Common myeloid progenitor, CD34-positive (primary cell): ENCODE measurements at regions of chr1 and their contacts with region 1.

Region 1: DNA sequence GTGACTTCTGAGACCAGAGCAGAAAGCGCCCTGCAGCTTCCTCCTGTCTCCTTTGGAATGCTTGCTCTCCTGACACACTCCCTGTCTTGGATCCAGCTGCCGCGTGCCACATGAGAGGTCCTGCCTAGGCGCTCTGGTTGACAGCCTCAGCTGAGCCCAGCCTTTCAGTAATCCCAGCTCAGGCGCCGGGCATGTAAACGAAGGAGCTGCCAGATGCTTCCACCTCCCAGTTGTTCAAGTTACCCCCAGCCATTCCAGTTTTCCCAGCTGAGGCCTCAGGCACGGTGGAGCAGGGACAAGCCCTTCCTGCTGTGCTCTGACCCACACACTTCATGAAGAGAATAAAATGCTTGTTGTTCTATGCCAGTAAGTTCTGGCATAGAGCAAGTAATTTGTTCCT is 14.3 kb upstream of the CD34 start:
- DNase-seq: no peak
- H3K4me3 ChIP-seq: no peak overlapping the region
- H3K27ac ChIP-seq: peak overlapping the region in 1 of 2 experiments; percentile 15
- H3K4me1 ChIP-seq: peaks cover 28 to 65% (median 54%) of the 10 kb centered on the region in 4 experiments
- H3K27me3 ChIP-seq: no peaks in the 10 kb centered on the region

Region 2: GRCh38 chr1:207903767-207904166 is 21.4 kb before region 1 on chr1:
- CTCF ChIA-PET with region 1: interaction called, 83 read pairs
- POLR2A ChIA-PET with region 1: no interaction called
- DNase-seq: peak; percentile 50 to 83 (median 72)
- H3K4me3 ChIP-seq: peak overlapping the region in 1 of 7 experiments; percentile 35
- H3K27ac ChIP-seq: peak overlapping the region; percentile 73 to 85
- H3K4me1 ChIP-seq: peaks cover 44 to 95% (median 81%) of the 10 kb centered on the region in 4 experiments
- H3K27me3 ChIP-seq: no peaks in the 10 kb centered on the region

Region 3: GRCh38 chr1:207941665-207942064 is 16.5 kb after region 1 on chr1:
- CTCF ChIA-PET with region 1: interaction called, 37 read pairs
- POLR2A ChIA-PET with region 1: interaction called, 10 read pairs
- DNase-seq: peak in 2 of 3 donors; percentile 40 to 48
- H3K4me3 ChIP-seq: peak overlapping the region in 3 of 7 experiments; percentile 48 to 73 (median 63)
- H3K27ac ChIP-seq: peak overlapping the region in 1 of 2 experiments; percentile 76
- H3K4me1 ChIP-seq: peaks cover 2 to 40% (median 20%) of the 10 kb centered on the region in 4 experiments
- H3K27me3 ChIP-seq: no peaks in the 10 kb centered on the region

Region 4: GRCh38 chr1:207981976-207982375 is 56.8 kb after region 1 on chr1:
- CTCF ChIA-PET with region 1: no interaction called
- POLR2A ChIA-PET with region 1: no interaction called
- DNase-seq: peak in 1 of 3 donors; percentile 28
- H3K4me3 ChIP-seq: no peak overlapping the region
- H3K27ac ChIP-seq: no peak overlapping the region
- H3K4me1 ChIP-seq: no peaks in the 10 kb centered on the region
- H3K27me3 ChIP-seq: no peaks in the 10 kb centered on the region

Region 5: GRCh38 chr1:207997486-207998268 is 72.5 kb after region 1 on chr1:
- CTCF ChIA-PET with region 1: no interaction called
- POLR2A ChIA-PET with region 1: no interaction called
- DNase-seq: peak; percentile 57 to 68 (median 57)
- H3K4me3 ChIP-seq: peak overlapping the region in 2 of 7 experiments; percentile 6 to 35
- H3K27ac ChIP-seq: no peak overlapping the region
- H3K4me1 ChIP-seq: peaks cover 0 to 8% (median 2%) of the 10 kb centered on the region in 4 experiments
- H3K27me3 ChIP-seq: no peaks in the 10 kb centered on the region

Region 6: DNA sequence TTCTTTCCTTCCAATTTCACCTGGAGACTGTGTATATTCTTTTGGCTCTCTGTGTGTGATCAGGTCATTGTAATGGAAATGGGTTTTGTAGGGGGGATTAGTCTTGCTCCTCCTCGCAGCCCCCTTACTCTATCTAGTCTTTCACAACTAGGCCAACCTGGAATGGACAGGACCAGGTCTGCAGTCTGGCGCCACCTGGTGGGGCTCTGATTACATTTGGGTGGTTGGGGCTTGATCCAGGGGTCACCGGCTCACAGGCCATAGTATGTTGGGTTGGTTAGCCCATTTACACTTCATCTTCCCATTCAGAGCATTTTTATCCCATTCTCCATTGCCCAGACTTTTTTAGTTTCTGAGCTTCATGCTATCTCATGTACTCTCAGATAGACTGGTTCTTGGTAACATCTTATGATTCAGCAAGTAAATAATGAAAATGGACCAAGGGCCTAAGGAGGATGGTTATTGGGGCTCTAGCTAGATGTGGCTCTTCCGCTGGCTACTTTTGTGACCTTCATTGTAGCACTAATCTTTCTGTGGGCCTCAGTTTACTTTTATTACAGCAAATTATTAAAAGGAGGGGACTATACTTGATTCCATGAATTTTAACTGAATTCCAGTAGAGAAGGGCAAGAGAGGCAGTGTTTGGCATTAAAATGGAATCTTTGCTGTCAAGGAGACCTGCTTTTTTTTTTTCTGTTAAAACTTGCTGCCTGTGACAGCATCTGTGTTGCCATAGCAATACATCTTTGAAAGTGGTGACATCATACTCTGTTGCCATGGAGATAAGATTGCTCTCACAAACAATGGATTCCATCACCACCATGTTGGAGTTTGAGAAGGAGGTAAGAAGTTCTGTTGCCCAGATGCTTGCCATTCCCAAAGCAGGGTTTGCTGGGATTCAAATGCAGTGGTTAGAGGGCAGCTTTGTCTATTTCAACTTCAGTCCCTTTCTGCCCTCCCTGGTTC is 168.8 kb after region 1 on chr1:
- CTCF ChIA-PET with region 1: no interaction called
- POLR2A ChIA-PET with region 1: no interaction called
- DNase-seq: peak; percentile 63 to 72 (median 70)
- H3K4me3 ChIP-seq: no peak overlapping the region
- H3K27ac ChIP-seq: no peak overlapping the region
- H3K4me1 ChIP-seq: no peaks in the 10 kb centered on the region
- H3K27me3 ChIP-seq: no peaks in the 10 kb centered on the region